Esophagus muscularis mucosa (tissue), 4 donors: ENCODE measurements at regions of chr7 and their contacts with region 1.

Region 1: GRCh38 chr7:151123822-151124464 is 37.7 kb downstream of the AGAP3 start:
- DNase-seq: no peak
- H3K4me3 ChIP-seq: no peak overlapping the region
- H3K27ac ChIP-seq: no peak overlapping the region
- H3K4me1 ChIP-seq: peaks cover 15 to 32% (median 21%) of the 10 kb centered on the region in 4 donors
- H3K27me3 ChIP-seq: no peaks in the 10 kb centered on the region
- CTCF ChIP-seq: peak; percentile 92 to 100 (median 95)
- EP300 ChIP-seq: no peak
- POLR2A ChIP-seq: no peak

Region 2: GRCh38 chr7:151172273-151173141 is 48.6 kb after region 1 on chr7:
- intact Hi-C with region 1: loop called (anchors 2 kb)
- DNase-seq: no peak
- H3K4me3 ChIP-seq: no peak overlapping the region
- H3K27ac ChIP-seq: no peak overlapping the region
- H3K4me1 ChIP-seq: peaks cover 8 to 27% (median 12%) of the 10 kb centered on the region in 4 donors
- H3K27me3 ChIP-seq: peaks cover 5 to 86% (median 15%) of the 10 kb centered on the region in 4 donors
- CTCF ChIP-seq: peak in 2 of 3 experiments; percentile 100
- EP300 ChIP-seq: no peak
- POLR2A ChIP-seq: no peak

Region 3: GRCh38 chr7:151185762-151186631 is 62.1 kb after region 1 on chr7:
- intact Hi-C with region 1: no loop called
- DNase-seq: no peak
- H3K4me3 ChIP-seq: no peak overlapping the region
- H3K27ac ChIP-seq: no peak overlapping the region
- H3K4me1 ChIP-seq: peaks cover 0 to 3% (median 0%) of the 10 kb centered on the region in 4 donors
- H3K27me3 ChIP-seq: peaks cover 0 to 17% (median 0%) of the 10 kb centered on the region in 4 donors
- CTCF ChIP-seq: no peak
- EP300 ChIP-seq: no peak
- POLR2A ChIP-seq: no peak

Region 4: GRCh38 chr7:151244196-151244840 is 120.4 kb after region 1 on chr7:
- intact Hi-C with region 1: loop called (anchors 10 kb)
- DNase-seq: no peak
- H3K4me3 ChIP-seq: no peak overlapping the region
- H3K27ac ChIP-seq: peak overlapping the region in 2 of 4 donors; percentile 2 to 25
- H3K4me1 ChIP-seq: peaks cover 55 to 67% (median 62%) of the 10 kb centered on the region in 4 donors
- H3K27me3 ChIP-seq: peaks cover 0 to 12% (median 0%) of the 10 kb centered on the region in 4 donors
- CTCF ChIP-seq: peak in 2 of 3 experiments; percentile 79 to 82
- EP300 ChIP-seq: no peak
- POLR2A ChIP-seq: no peak